ENCODE measurements at regions of chr1 and their contacts with region 1.

Region 1: DNA sequence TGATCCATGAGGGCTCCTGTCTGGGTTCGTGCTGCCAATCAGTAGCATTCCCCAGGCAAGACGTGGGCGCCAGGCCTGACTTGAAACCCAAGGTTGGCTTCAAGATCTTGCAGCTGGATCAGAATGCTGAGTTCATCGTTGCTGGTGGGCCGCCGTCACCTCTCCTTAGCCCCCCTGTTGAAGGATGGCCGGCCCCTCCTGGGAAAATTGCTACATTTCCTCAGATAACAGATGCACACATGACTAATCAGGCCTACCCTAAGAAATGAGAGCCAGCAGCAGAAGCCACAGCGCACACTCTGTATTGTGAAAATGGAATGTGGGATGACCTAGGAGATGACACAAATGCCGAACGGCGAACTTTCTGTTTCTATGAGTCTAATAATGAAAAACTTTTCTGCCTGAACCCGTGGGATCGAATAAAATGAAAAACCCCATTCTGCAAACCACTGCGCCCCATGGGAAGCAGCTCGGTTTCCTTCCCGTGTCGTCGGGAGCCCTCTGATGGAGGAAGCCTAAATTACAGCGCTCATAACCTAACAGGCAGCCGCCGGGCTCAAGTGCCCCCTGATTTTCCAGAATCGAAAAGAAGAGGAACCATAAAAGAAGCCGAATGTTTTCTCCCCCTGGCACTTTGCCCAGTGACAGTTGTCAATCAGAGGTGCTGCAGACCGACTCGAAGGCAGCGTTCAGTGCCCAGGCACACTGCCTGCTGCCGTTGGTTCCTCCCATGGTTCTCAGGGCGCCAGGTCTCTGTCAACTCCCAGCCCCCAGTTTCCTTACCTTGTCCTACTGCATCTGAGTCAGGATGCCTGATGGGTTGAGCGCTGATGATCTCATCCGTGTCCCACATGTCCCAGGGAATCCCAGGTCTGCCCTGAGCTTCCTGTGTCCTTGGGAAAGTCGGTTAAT is 38.2 kb upstream of the H6PD start:
- DNase-seq: peak; percentile 78
- ATAC-seq: peak; percentile 85
- H3K4me3 ChIP-seq: no peak overlapping the region
- H3K27ac ChIP-seq: peak overlapping the region; percentile 70
- H3K4me1 ChIP-seq: peaks cover 19% of the 10 kb centered on the region
- H3K27me3 ChIP-seq: peaks cover 36% of the 10 kb centered on the region
- CTCF ChIP-seq: peak; percentile 84

Region 2: GRCh38 chr1:8976896-8977450 is 219.4 kb before region 1 on chr1:
- intact Hi-C with region 1: no loop called
- DNase-seq: no peak
- ATAC-seq: no peak
- H3K4me3 ChIP-seq: no peak overlapping the region
- H3K27ac ChIP-seq: no peak overlapping the region
- H3K4me1 ChIP-seq: no peaks in the 10 kb centered on the region
- H3K27me3 ChIP-seq: no peaks in the 10 kb centered on the region
- CTCF ChIP-seq: no peak

Region 3: GRCh38 chr1:9107136-9107535 is 89.2 kb before region 1 on chr1:
- intact Hi-C with region 1: loop called (anchors 5 kb)
- DNase-seq: no peak
- ATAC-seq: no peak
- H3K4me3 ChIP-seq: no peak overlapping the region
- H3K27ac ChIP-seq: no peak overlapping the region
- H3K4me1 ChIP-seq: peaks cover 3% of the 10 kb centered on the region
- H3K27me3 ChIP-seq: no peaks in the 10 kb centered on the region
- CTCF ChIP-seq: no peak

Region 4: GRCh38 chr1:9128520-9129265 is 67.7 kb before region 1 on chr1 and contains the start of gene GPR157:
- intact Hi-C with region 1: no loop called
- DNase-seq: peak; percentile 97
- ATAC-seq: peak; percentile 97
- H3K4me3 ChIP-seq: peak within 1 kb of the TSS; percentile 65
- H3K27ac ChIP-seq: peak within 1 kb of the TSS; percentile 85
- H3K4me1 ChIP-seq: peaks cover 20% of the 10 kb centered on the region
- H3K27me3 ChIP-seq: no peaks in the 10 kb centered on the region
- CTCF ChIP-seq: no peak
- total RNA-seq, gene GPR157: 19.0 TPM

Region 5: DNA sequence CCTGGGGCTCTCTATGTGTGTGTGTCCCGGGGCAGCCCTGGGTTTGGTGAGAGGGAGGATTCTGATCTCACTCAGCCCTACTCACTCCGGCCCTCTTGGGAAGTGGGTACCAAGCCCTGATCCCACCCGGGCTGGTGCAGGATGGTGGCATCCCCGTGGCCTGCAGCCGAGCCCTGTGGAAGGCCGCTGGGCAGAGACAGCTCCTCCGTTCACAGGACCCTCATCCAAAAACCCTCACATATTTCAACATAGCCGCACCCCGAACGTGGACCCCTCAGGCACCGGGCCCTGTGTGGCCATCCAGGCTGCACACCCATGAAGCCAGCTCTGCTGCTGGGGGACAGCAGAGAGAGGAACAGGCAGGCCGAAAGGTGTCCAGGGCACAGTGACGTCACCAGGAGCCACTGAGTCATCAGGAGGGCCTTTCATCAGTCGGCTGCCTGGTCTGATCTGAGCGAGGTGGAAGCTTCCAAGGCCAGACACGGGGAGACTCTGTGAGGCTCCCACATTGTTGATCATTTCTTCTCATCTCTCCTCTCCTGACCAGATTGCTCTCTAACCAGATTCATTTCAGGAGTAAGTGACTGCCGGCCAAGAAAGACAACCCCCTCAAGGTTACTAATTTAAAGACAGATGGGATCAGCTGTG is 51.2 kb before region 1 on chr1:
- intact Hi-C with region 1: loop called (anchors 10 kb)
- DNase-seq: no peak
- ATAC-seq: no peak
- H3K4me3 ChIP-seq: no peak overlapping the region
- H3K27ac ChIP-seq: no peak overlapping the region
- H3K4me1 ChIP-seq: peaks cover 14% of the 10 kb centered on the region
- H3K27me3 ChIP-seq: no peaks in the 10 kb centered on the region
- CTCF ChIP-seq: no peak

Measured in upper lobe of right lung (tissue), 1 donor.